HepG2 (cell line): ENCODE measurements at regions of chr15 and their contacts with region 1.

Region 1: DNA sequence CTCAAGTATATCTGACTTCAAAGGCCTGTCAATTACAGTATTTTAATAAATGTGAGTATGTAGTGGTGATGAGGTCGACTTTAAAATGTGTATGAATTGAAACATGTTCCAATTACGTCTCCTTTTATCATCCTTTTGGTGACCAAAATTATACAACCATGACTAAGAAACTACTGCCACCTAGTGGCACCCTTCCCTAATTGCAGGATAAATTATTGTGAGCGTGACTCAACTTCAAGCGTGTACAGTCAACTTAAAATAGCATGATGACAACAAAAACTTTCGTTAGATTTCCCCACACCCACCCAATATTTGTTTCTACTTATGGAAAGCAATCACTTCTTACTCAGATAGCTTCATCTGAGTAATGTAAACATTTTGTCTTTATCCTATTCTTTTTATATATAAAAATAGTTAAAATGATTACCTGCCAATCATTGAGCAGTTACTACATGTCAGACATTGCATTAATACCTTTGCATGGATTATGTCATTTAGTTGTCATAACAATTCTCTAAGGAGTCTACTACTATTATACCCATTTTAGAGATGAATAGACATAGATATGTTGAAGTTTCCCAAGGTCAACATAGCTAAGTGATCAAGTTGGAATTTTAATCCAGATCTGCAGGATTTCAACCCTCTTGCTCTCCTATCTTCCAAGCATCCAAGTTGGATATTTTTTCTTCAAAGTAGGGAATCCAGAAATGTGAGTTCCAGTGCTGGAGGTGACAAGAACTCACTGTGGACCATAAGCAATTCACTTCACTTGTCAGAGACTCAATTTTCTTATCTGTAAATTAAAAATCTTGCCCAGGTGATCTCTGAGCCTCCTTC is 106.0 kb downstream of the MEX3B start:
- DNase-seq: peak; percentile 19
- ATAC-seq: no peak
- H3K4me3 ChIP-seq: no peak overlapping the region
- H3K27ac ChIP-seq: no peak overlapping the region
- H3K4me1 ChIP-seq: no peaks in the 10 kb centered on the region
- H3K27me3 ChIP-seq: no peaks in the 10 kb centered on the region
- CTCF ChIP-seq: peak; percentile 65
- EP300 ChIP-seq: no peak
- POLR2A ChIP-seq: no peak
- RAD21 ChIP-seq: no peak; the same call in 1 of the 2 replicates

Region 2: DNA sequence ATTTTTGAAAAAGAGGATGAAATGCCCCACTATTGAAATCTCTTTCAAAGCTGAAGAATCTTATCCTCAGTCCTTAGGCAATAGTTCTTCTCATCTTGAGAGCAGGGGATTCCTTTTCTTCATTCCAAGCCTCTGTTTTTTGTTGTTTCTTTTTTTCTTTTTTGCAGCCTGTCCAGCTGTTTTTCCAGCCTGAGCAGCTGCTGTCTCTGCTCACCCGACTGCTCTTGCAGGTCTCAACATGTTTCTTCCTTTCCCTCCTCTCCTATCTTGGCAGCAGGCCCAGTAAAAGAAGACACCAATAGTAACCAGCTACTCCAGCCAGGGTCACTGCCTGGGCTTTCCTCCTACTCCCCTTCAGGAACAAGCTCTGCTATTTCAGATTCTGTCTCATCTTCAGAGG is 82.2 kb after region 1 on chr15:
- CTCF ChIA-PET with region 1: no interaction called
- POLR2A ChIA-PET with region 1: no interaction called
- in situ Hi-C with region 1: no loop called
- intact Hi-C with region 1: no loop called
- DNase-seq: no peak
- ATAC-seq: no peak
- H3K4me3 ChIP-seq: no peak overlapping the region
- H3K27ac ChIP-seq: no peak overlapping the region
- H3K4me1 ChIP-seq: no peaks in the 10 kb centered on the region
- H3K27me3 ChIP-seq: peaks cover 0 to 20% of the 10 kb centered on the region in 2 experiments; a peak in 3 of 5 replicates
- CTCF ChIP-seq: no peak
- EP300 ChIP-seq: no peak
- POLR2A ChIP-seq: no peak
- RAD21 ChIP-seq: no peak

Region 3: DNA sequence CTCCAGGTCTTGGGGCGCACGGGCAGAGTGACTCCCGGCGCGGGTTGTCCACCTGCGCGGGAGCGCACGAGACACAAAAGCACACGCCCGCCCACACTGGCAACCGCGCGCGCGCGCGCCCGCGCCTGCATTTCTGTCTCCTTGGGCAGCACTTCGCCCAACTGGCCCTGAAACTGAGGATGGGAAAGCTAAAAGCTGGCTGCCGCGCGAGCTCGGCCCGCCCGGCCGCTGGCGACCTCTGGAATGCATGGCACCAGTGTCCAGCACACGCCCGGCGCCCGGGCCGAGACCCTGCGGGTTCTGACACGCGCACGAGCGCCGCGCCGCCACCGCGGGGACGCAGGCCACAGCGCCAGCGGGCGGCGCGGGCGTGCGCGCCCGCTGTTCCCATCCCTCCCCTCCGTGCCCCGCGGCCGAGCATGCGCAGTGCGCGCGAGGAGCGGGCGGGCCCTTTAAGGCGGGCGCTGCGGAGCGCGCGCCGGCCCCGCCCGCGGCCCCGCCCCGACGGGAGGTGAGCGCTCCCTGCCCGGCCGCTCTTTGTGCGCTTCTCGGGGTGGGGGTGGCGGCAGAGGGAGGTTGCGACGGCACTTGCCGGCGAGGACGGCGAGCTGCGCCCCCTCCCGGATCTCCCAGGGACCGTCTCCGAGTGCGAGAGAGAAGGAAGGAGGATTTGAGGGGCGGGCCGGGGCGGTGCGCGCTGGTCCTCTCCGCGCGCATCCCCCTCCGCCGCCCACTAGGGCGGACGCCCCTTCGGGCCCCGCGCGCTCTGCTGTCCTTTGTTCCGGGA is 107.0 kb after region 1 on chr15:
- CTCF ChIA-PET with region 1: no interaction called
- POLR2A ChIA-PET with region 1: no interaction called
- in situ Hi-C with region 1: no loop called
- intact Hi-C with region 1: loop called (anchors 1 kb)
- DNase-seq: peak; percentile 73
- ATAC-seq: peak; percentile 79
- H3K4me3 ChIP-seq: peak overlapping the region; percentile 67 to 80 (median 80)
- H3K27ac ChIP-seq: peak overlapping the region; percentile 29
- H3K4me1 ChIP-seq: peaks cover 8% of the 10 kb centered on the region; the same call in 1 of the 2 replicates
- H3K27me3 ChIP-seq: peaks cover 2 to 32% of the 10 kb centered on the region in 2 experiments; a peak in 4 of 5 replicates
- CTCF ChIP-seq: peak; percentile 69
- EP300 ChIP-seq: no peak
- POLR2A ChIP-seq: 0 out of 4 replicates have a peak, but pooled peaks of 1 of the 2 experiments have one; percentile 42
- RAD21 ChIP-seq: peak; percentile 62